H1 (cell line): ENCODE measurements at regions of chr11 and their contacts with region 1.

Region 1: GRCh38 chr11:69881449-69882269 is 62.4 kb upstream of the FGF3 start:
- DNase-seq: peak in 1 of 2 experiments; percentile 73
- H3K4me3 ChIP-seq: no peak overlapping the region
- H3K27ac ChIP-seq: no peak overlapping the region
- H3K4me1 ChIP-seq: peaks cover 0 to 8% (median 0%) of the 10 kb centered on the region in 4 experiments; a peak in 4 of 7 replicates
- H3K27me3 ChIP-seq: no peaks in the 10 kb centered on the region; a peak in 2 of 7 replicates
- CTCF ChIP-seq: peak; percentile 61 to 72 (median 69)
- EP300 ChIP-seq: no peak
- POLR2A ChIP-seq: no peak
- RAD21 ChIP-seq: peak; percentile 50 to 69

Region 2: GRCh38 chr11:69704508-69705253 is 177.0 kb before region 1 on chr11:
- CTCF ChIA-PET with region 1: interaction called, 10 read pairs
- POLR2A ChIA-PET with region 1: interaction called, 3 read pairs
- DNase-seq: peak in 1 of 2 experiments; percentile 96
- H3K4me3 ChIP-seq: peak overlapping the region; percentile 37 to 78 (median 62)
- H3K27ac ChIP-seq: 0 out of 2 replicates have a peak overlapping the region, but pooled peaks have one; percentile 44
- H3K4me1 ChIP-seq: peaks cover 11 to 36% (median 24%) of the 10 kb centered on the region in 4 experiments
- H3K27me3 ChIP-seq: peaks cover 0 to 26% (median 17%) of the 10 kb centered on the region in 4 experiments; a peak in 5 of 7 replicates
- CTCF ChIP-seq: peak; percentile 63 to 76 (median 75)
- EP300 ChIP-seq: no peak
- POLR2A ChIP-seq: no peak
- RAD21 ChIP-seq: peak; percentile 70 to 82

Region 3: GRCh38 chr11:69801519-69802335 is 79.9 kb before region 1 on chr11:
- CTCF ChIA-PET with region 1: interaction called, 29 read pairs
- POLR2A ChIA-PET with region 1: interaction called, 3 read pairs
- DNase-seq: peak; percentile 59 to 96
- H3K4me3 ChIP-seq: no peak overlapping the region
- H3K27ac ChIP-seq: no peak overlapping the region
- H3K4me1 ChIP-seq: peaks cover 0 to 5% (median 0%) of the 10 kb centered on the region in 4 experiments; a peak in 3 of 7 replicates
- H3K27me3 ChIP-seq: no peaks in the 10 kb centered on the region; a peak in 1 of 7 replicates
- CTCF ChIP-seq: peak; percentile 89 to 97 (median 91)
- EP300 ChIP-seq: no peak
- POLR2A ChIP-seq: no peak
- RAD21 ChIP-seq: peak; percentile 77 to 87

Region 4: DNA sequence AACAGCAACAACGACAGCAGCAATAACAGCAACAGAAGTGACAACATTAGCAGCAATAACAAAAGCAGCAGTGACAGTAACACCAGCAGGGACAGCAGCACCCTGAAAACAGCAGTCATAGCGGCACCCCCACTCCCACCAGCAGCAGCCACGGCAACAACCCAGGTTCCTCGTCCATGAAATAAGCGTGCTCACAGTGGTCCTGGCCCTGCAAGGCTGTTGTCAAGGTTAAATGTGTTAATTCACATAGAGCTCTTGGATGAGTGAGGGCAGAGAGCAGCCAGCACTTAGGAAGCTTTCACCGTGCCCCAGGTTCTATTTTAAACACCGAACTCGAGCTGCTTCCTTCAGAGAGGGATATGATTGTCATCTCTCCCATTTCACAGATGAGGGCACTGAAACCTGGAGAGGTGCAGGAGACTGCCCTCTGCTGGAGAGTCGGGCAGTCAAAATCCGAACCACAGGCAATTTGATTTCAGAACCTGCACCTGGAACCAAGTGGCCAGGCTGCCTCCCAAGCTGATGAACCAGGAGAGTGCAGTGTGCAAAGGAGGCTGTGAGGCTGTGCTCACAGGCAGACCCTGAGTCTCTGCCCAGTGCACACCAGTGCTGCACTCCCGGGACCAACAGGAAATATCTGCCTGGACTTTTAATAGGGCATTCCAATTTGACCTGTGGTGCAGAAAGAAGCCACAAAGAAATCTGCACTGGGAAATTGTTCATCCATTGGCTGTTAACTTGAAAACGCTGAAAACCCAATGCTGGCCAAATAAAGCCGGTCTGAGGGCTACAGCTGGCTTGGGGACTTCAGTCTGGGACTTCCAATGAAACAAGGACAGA is 39.6 kb before region 1 on chr11:
- CTCF ChIA-PET with region 1: interaction called, 18 read pairs
- POLR2A ChIA-PET with region 1: no interaction called
- DNase-seq: peak in 1 of 2 experiments; percentile 63
- H3K4me3 ChIP-seq: no peak overlapping the region
- H3K27ac ChIP-seq: no peak overlapping the region
- H3K4me1 ChIP-seq: peaks cover 0 to 11% (median 2%) of the 10 kb centered on the region in 4 experiments; a peak in 4 of 7 replicates
- H3K27me3 ChIP-seq: peaks cover 0 to 2% (median 0%) of the 10 kb centered on the region in 4 experiments; a peak in 2 of 7 replicates
- CTCF ChIP-seq: peak; percentile 69 to 84 (median 79)
- EP300 ChIP-seq: no peak
- POLR2A ChIP-seq: no peak
- RAD21 ChIP-seq: peak; percentile 47 to 63

Region 5: GRCh38 chr11:69867738-69868493 is 13.7 kb before region 1 on chr11:
- CTCF ChIA-PET with region 1: interaction called, 36 read pairs
- POLR2A ChIA-PET with region 1: interaction called, 4 read pairs
- DNase-seq: no peak
- H3K4me3 ChIP-seq: no peak overlapping the region
- H3K27ac ChIP-seq: no peak overlapping the region
- H3K4me1 ChIP-seq: peaks cover 0 to 18% (median 9%) of the 10 kb centered on the region in 4 experiments; a peak in 5 of 7 replicates
- H3K27me3 ChIP-seq: peaks cover 0 to 3% (median 1%) of the 10 kb centered on the region in 4 experiments; a peak in 2 of 7 replicates
- CTCF ChIP-seq: no peak
- EP300 ChIP-seq: no peak
- POLR2A ChIP-seq: no peak
- RAD21 ChIP-seq: no peak

Region 6: DNA sequence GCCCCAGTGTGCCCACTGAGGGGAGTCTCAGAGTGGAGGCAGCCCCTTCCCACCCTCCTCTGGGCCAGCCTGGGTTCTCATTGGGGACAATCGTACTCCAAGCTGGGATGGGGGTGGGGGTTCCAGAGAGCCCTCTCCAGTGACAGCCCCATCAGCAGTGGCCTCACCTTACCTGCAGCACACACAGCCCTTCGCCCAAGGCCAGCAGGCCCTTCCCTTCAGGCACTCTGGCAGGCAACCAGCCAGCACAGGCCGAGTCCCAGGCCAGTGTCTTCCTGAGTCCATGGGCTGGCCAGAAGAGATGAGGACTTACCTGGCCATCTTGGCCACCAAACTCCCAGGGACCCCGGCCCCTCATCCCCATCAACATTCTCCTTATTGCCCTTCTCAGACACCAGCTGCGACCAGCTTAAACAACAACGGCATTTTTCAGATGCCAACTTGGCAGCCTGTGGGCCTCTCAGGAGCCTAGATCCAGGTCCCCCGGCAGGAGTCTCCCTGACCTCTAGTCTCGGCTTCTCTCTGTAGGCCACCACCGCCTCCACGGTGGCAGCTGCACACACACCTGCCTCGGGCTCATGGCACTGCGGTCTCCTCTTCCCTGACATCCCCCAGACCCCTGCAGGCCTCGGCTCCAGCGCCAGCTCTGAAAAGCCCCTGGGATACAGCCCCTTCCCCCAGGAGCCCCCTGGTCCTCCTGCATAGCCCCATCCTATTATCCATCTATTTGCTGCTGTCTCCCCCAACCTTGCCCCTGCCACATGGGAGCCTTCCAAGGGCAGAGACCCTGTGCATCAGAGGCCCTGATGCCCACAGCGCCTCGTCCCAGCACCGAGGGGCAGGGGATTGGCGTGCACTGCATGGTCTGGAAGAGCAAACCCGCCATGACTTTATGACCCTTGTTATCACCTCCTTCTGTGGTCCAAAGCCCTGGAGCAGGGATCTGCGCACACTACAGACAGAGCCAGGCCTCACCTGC is 48.7 kb after region 1 on chr11:
- CTCF ChIA-PET with region 1: no interaction called
- POLR2A ChIA-PET with region 1: no interaction called
- DNase-seq: no peak
- H3K4me3 ChIP-seq: no peak overlapping the region
- H3K27ac ChIP-seq: no peak overlapping the region
- H3K4me1 ChIP-seq: peaks cover 2 to 9% (median 6%) of the 10 kb centered on the region in 4 experiments
- H3K27me3 ChIP-seq: peaks cover 0 to 9% (median 2%) of the 10 kb centered on the region in 4 experiments; a peak in 2 of 7 replicates
- CTCF ChIP-seq: no peak
- EP300 ChIP-seq: no peak
- POLR2A ChIP-seq: no peak
- RAD21 ChIP-seq: no peak

Region 7: DNA sequence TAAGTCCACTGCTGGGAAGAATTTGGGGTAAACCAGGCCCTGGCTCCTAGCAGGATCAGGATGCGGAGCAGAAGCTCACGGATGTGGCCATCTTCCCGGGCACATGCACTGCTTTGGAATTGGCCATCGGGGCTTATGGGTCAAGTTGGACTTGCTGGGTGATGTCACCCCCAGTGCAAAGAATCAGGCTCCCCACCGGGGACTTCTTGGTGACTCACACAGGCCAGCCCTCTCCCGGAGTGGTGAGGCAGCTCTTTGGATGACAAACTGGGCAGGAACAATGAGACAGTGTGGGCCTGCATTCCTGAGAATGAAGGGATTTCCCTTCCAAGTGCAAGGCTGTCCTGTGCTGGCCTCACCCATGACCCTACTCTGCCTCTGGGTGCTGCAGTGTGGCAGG is 67.7 kb after region 1 on chr11:
- CTCF ChIA-PET with region 1: no interaction called
- POLR2A ChIA-PET with region 1: no interaction called
- DNase-seq: no peak
- H3K4me3 ChIP-seq: no peak overlapping the region
- H3K27ac ChIP-seq: no peak overlapping the region
- H3K4me1 ChIP-seq: peaks cover 4 to 16% (median 9%) of the 10 kb centered on the region in 4 experiments; a peak in 6 of 7 replicates
- H3K27me3 ChIP-seq: no peaks in the 10 kb centered on the region; a peak in 1 of 7 replicates
- CTCF ChIP-seq: no peak
- EP300 ChIP-seq: no peak
- POLR2A ChIP-seq: no peak
- RAD21 ChIP-seq: no peak